ENCODE measurements at regions of chr2 and their contacts with region 1.

Region 1: GRCh38 chr2:45283764-45284620 is 274.7 kb upstream of the SIX2 start:
- DNase-seq: no peak
- H3K4me3 ChIP-seq: no peak overlapping the region
- H3K27ac ChIP-seq: no peak overlapping the region
- H3K4me1 ChIP-seq: no peaks in the 10 kb centered on the region
- H3K27me3 ChIP-seq: no peaks in the 10 kb centered on the region
- CTCF ChIP-seq: no peak
- POLR2A ChIP-seq: no peak

Region 2: GRCh38 chr2:44215827-44216226 is 1068.2 kb before region 1 on chr2:
- intact Hi-C with region 1: no loop called
- DNase-seq: no peak
- H3K4me3 ChIP-seq: no peak overlapping the region
- H3K27ac ChIP-seq: no peak overlapping the region
- H3K4me1 ChIP-seq: no peaks in the 10 kb centered on the region
- H3K27me3 ChIP-seq: no peaks in the 10 kb centered on the region
- CTCF ChIP-seq: no peak
- POLR2A ChIP-seq: no peak

Region 3: GRCh38 chr2:44335806-44336538 is 948.0 kb before region 1 on chr2:
- intact Hi-C with region 1: loop called (anchors 5 kb)
- DNase-seq: no peak
- H3K4me3 ChIP-seq: no peak overlapping the region
- H3K27ac ChIP-seq: no peak overlapping the region
- H3K4me1 ChIP-seq: no peaks in the 10 kb centered on the region
- H3K27me3 ChIP-seq: no peaks in the 10 kb centered on the region
- CTCF ChIP-seq: no peak
- POLR2A ChIP-seq: no peak

Region 4: GRCh38 chr2:44707945-44708660 is 575.9 kb before region 1 on chr2:
- intact Hi-C with region 1: no loop called
- DNase-seq: no peak
- H3K4me3 ChIP-seq: no peak overlapping the region
- H3K27ac ChIP-seq: no peak overlapping the region
- H3K4me1 ChIP-seq: no peaks in the 10 kb centered on the region
- H3K27me3 ChIP-seq: no peaks in the 10 kb centered on the region
- CTCF ChIP-seq: no peak
- POLR2A ChIP-seq: no peak

Region 5: DNA sequence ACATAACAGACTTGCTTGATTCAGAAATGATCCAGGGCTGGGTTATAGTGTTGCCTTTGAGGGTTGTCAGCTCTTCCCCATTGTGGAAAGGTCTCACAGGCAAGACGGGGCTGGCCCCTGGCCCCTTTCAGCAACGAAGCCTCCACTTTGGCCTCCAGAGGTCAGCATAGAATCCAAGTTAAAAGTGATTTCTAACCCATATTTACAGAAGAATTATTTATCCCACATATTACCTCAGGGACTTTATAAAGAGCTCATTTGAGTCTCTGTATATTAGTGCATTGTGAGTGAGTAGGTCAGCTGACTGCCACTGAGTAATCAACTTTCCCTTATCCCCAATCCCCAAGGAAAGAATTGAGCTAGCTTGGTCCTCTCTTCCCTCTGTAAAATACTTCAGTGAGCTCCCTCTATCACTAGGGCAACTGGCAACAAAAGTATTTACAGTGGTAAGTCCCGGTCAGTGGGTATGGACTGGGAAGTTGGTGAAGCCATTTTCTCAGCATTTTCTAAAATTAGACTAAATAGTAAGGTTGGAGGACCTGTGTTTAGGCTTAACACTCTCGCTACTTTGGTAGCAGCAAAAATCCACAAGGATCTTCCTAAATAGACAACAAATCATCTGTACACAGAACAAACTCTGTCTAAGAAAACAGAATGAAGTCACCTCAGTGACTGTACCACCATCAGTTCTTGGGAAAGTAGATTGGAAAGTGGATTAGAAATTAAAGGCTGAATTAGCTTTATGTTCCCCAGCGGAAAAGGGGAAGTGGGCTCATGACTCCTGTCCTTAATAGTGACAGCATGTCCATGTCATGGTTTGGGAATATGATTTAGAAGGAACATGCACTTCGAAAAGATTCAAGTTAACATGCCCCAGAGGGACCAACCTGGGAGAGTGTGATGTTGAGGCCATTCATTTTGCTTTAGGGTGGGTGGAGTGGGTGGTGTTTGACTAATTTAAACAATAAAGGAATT is 513.5 kb before region 1 on chr2:
- intact Hi-C with region 1: no loop called
- DNase-seq: no peak
- H3K4me3 ChIP-seq: no peak overlapping the region
- H3K27ac ChIP-seq: no peak overlapping the region
- H3K4me1 ChIP-seq: no peaks in the 10 kb centered on the region
- H3K27me3 ChIP-seq: no peaks in the 10 kb centered on the region
- CTCF ChIP-seq: no peak
- POLR2A ChIP-seq: no peak

Region 6: GRCh38 chr2:45343251-45344017 is 59.4 kb after region 1 on chr2:
- intact Hi-C with region 1: no loop called
- DNase-seq: no peak
- H3K4me3 ChIP-seq: no peak overlapping the region
- H3K27ac ChIP-seq: no peak overlapping the region
- H3K4me1 ChIP-seq: no peaks in the 10 kb centered on the region
- H3K27me3 ChIP-seq: no peaks in the 10 kb centered on the region
- CTCF ChIP-seq: no peak
- POLR2A ChIP-seq: no peak